Endothelial cell of umbilical vein (primary cell): ENCODE measurements at regions of chr2 and their contacts with region 1.

Region 1: GRCh38 chr2:56009758-56010458 is 86.3 kb upstream of the EFEMP1 start:
- DNase-seq: peak; percentile 81
- H3K4me3 ChIP-seq: no peak overlapping the region
- H3K27ac ChIP-seq: peak overlapping the region; percentile 100
- H3K4me1 ChIP-seq: peaks cover 73% of the 10 kb centered on the region
- H3K27me3 ChIP-seq: no peaks in the 10 kb centered on the region
- CTCF ChIP-seq: peak; percentile 37
- POLR2A ChIP-seq: no peak

Region 2: GRCh38 chr2:55693181-55694134 is 316.4 kb before region 1 on chr2 and contains the start of gene PNPT1:
- CTCF ChIA-PET with region 1: no interaction called
- POLR2A ChIA-PET with region 1: no interaction called
- dilution Hi-C with region 1: no loop called
- intact Hi-C with region 1: loop called (anchors 1 kb)
- DNase-seq: peak; percentile 94
- H3K4me3 ChIP-seq: peak within 1 kb of the TSS; percentile 49 to 83 (median 51)
- H3K27ac ChIP-seq: peak within 1 kb of the TSS; percentile 21
- H3K4me1 ChIP-seq: peaks cover 8% of the 10 kb centered on the region
- H3K27me3 ChIP-seq: peaks cover 2 to 4% of the 10 kb centered on the region in 2 experiments
- CTCF ChIP-seq: no peak
- POLR2A ChIP-seq: peak; percentile 85
- total RNA-seq, gene PNPT1: 32.4 and 34.2 TPM in 2 replicates

Region 3: GRCh38 chr2:55862673-55863390 is 147.1 kb before region 1 on chr2:
- CTCF ChIA-PET with region 1: no interaction called
- POLR2A ChIA-PET with region 1: no interaction called
- dilution Hi-C with region 1: no loop called
- intact Hi-C with region 1: loop called (anchors 1 kb)
- DNase-seq: peak; percentile 98
- H3K4me3 ChIP-seq: no peak overlapping the region
- H3K27ac ChIP-seq: peak overlapping the region; percentile 92
- H3K4me1 ChIP-seq: peaks cover 54% of the 10 kb centered on the region
- H3K27me3 ChIP-seq: no peaks in the 10 kb centered on the region
- CTCF ChIP-seq: no peak
- POLR2A ChIP-seq: peak; percentile 80

Region 4: GRCh38 chr2:55916473-55917049 is 93.3 kb before region 1 on chr2:
- CTCF ChIA-PET with region 1: interaction called, 6 read pairs
- POLR2A ChIA-PET with region 1: no interaction called
- dilution Hi-C with region 1: no loop called
- intact Hi-C with region 1: loop called (anchors 1 kb)
- DNase-seq: peak; percentile 80
- H3K4me3 ChIP-seq: peak overlapping the region in 2 of 3 experiments; percentile 57 to 97
- H3K27ac ChIP-seq: peak overlapping the region; percentile 82
- H3K4me1 ChIP-seq: peaks cover 91% of the 10 kb centered on the region
- H3K27me3 ChIP-seq: no peaks in the 10 kb centered on the region
- CTCF ChIP-seq: no peak
- POLR2A ChIP-seq: no peak

Region 5: DNA sequence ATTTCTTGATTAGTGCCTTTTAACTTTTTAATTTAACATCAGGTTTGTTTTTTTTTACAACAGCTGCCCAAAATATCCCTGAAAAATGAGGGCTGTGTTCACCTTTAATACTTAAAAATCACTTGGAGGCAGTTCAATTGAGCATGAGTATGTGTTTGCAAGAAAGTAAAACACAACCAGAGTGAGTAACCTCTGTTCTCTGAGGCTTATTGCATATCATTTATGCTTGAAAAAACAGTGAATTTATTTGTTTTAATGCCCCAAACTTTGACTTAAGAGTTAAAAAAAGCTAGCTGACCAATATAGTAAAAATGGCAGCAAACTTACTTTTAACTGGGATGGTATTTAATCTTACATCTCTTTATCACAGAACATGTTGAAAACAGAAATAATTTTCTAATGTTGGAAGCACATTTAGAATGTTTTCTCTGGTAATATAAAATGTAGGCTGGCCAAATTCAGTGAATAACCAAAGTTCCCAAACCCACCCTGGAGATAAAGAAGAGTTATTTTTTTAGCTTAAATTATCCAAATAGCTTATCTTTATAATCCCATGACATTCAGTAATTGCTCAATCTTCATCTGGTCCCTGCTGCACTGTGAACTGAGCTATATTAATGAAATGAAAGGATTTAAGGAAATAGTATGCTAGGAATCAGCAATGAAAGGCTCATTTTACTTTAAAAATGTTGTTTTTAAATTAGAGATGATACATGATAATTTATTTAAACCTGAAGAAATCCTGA is 61.6 kb before region 1 on chr2:
- CTCF ChIA-PET with region 1: no interaction called
- POLR2A ChIA-PET with region 1: no interaction called
- dilution Hi-C with region 1: no loop called
- intact Hi-C with region 1: no loop called
- DNase-seq: peak; percentile 62
- H3K4me3 ChIP-seq: no peak overlapping the region
- H3K27ac ChIP-seq: no peak overlapping the region
- H3K4me1 ChIP-seq: no peaks in the 10 kb centered on the region
- H3K27me3 ChIP-seq: no peaks in the 10 kb centered on the region
- CTCF ChIP-seq: no peak
- POLR2A ChIP-seq: no peak

Region 6: GRCh38 chr2:55966401-55967118 is 43.3 kb before region 1 on chr2:
- CTCF ChIA-PET with region 1: interaction called, 46 read pairs
- POLR2A ChIA-PET with region 1: interaction called, 11 read pairs
- dilution Hi-C with region 1: no loop called
- intact Hi-C with region 1: loop called (anchors 1 kb)
- DNase-seq: peak; percentile 97
- H3K4me3 ChIP-seq: no peak overlapping the region
- H3K27ac ChIP-seq: peak overlapping the region; percentile 97
- H3K4me1 ChIP-seq: peaks cover 50% of the 10 kb centered on the region
- H3K27me3 ChIP-seq: no peaks in the 10 kb centered on the region
- CTCF ChIP-seq: peak; percentile 7
- POLR2A ChIP-seq: peak; percentile 48